Activated CD4-positive, alpha-beta T cell treated with anti-CD3 and anti-CD28 coated beads, Interleukin-2, amount 10 ng/mL, durations not matched to agents 7 days and 5 days (primary cell): ENCODE measurements at regions of chr11 and their contacts with region 1.

Region 1: DNA sequence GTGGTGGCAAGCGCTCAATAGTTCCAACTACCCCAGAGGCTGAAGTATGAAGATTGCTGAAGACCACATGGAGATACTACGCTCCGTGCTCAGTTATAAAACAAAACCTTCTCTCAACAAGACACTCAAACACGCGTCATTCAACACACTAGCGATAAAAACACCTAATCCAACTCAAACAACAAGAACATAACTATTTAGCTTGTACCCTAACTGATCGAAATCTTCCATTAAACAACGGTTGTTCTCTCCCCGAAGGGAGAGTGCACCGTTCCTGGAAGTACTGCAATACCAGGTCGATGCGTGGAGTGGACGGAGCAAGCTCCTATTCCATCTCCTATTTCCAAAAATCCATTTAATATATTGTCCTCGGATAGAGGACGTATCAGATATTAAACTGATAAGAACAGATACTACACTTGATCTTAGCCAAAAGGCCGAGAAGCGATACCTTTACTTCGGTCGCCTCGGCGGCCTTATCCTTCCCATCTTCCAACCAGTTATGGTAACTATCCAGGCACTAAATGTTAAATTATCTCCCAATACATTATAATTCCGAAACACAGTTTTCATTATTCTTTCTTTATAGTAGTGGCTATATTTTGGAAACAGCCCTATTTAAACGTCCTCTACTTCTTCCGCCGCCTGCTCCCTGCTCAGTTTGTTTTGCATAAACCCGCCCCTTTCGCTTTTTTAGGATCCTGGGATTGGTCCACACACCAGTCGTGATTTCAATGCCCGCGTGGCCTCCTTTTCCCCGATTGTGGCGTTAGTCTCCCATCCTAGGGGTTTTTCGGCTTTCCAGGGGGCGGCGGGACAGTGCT is 2.2 kb upstream of the WDR74 start:
- DNase-seq: peak; percentile 93
- H3K4me3 Mint-ChIP-seq: no peak overlapping the region
- H3K27ac Mint-ChIP-seq: no peak overlapping the region
- H3K4me1 Mint-ChIP-seq: peaks cover 16% of the 10 kb centered on the region
- H3K27me3 Mint-ChIP-seq: no peaks in the 10 kb centered on the region

Region 2: DNA sequence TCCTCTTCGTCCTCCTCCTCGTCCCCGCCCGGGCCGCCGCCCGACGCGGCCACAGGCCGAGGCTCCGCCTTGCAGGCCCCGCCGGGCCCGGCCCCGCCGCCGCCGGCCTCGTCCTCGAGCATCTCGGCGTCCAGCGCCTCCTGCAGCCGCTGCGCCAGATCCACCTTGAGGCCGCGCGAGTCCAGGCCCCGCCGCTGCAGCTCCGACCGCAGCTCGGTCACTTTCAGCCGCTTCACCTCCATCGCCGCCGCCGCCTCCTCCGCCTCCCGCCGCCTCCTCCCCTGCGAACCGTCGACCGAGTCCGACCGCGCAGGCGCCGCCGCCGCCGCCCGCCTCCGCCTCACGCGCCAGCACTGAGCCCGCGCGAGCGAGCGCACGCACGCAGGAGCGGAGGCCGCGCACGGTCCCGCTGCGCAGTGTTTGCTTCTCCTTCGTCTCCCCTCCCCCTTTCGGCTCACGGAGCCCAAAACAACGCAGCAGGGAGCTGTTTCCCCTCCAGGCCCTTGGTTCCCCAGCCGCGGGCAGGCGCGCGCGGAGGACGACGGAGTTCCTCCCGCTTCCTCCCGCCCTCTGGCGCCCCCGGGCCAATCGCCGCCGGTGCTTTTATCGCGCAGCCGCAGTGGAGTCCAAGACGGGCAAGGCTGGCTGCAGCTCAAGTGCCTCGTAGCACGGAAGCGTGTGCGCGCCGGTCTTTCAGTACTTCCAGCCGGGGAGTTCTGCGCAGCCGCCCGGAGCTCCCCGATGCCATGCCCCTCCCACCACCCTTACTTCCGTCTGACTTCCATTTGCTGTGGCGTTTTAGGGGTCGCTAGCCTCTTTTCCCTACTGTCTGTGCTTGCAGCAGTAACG is 114.4 kb before region 1 on chr11 and contains the start of gene HNRNPUL2:
- CTCF ChIA-PET with region 1: no interaction called
- POLR2A ChIA-PET with region 1: interaction called, 17 read pairs
- DNase-seq: peak; percentile 98
- H3K4me3 Mint-ChIP-seq: peak within 1 kb of the TSS; percentile 96
- H3K27ac Mint-ChIP-seq: peak within 1 kb of the TSS; percentile 98
- H3K4me1 Mint-ChIP-seq: peaks cover 54% of the 10 kb centered on the region
- H3K27me3 Mint-ChIP-seq: no peaks in the 10 kb centered on the region
- total RNA-seq, gene HNRNPUL2: 67.9 to 69.0 TPM

Region 3: DNA sequence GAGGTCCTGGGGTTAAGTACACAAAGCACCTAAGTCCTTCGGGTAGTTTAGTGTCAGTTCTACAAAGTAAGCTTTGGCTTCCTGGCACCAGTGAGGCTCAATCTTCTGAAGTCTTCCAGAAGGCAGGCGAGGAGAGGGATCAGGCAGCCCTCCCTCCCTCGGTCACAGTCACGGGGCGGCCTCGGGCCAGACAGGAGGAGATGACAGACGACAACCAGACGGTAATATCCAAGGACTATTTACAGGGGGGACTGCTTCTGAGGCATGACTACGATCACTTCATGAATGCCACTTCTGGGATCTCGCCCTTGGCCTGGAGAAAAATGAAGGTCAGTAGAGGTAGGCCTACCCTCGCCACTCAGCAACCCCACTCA is 49.4 kb before region 1 on chr11:
- CTCF ChIA-PET with region 1: interaction called, 18 read pairs
- POLR2A ChIA-PET with region 1: interaction called, 24 read pairs
- DNase-seq: no peak
- H3K4me3 Mint-ChIP-seq: peak overlapping the region; percentile 87
- H3K27ac Mint-ChIP-seq: peak overlapping the region; percentile 88
- H3K4me1 Mint-ChIP-seq: peaks cover 48% of the 10 kb centered on the region
- H3K27me3 Mint-ChIP-seq: no peaks in the 10 kb centered on the region

Region 4: GRCh38 chr11:62855571-62856332 is 14.2 kb after region 1 on chr11:
- CTCF ChIA-PET with region 1: interaction called, 9 read pairs
- POLR2A ChIA-PET with region 1: interaction called, 58 read pairs
- DNase-seq: peak; percentile 98
- H3K4me3 Mint-ChIP-seq: peak overlapping the region; percentile 95
- H3K27ac Mint-ChIP-seq: peak overlapping the region; percentile 99
- H3K4me1 Mint-ChIP-seq: peaks cover 65% of the 10 kb centered on the region
- H3K27me3 Mint-ChIP-seq: no peaks in the 10 kb centered on the region